ENCODE measurements at regions of chr12 and their contacts with region 1.

Region 1: DNA sequence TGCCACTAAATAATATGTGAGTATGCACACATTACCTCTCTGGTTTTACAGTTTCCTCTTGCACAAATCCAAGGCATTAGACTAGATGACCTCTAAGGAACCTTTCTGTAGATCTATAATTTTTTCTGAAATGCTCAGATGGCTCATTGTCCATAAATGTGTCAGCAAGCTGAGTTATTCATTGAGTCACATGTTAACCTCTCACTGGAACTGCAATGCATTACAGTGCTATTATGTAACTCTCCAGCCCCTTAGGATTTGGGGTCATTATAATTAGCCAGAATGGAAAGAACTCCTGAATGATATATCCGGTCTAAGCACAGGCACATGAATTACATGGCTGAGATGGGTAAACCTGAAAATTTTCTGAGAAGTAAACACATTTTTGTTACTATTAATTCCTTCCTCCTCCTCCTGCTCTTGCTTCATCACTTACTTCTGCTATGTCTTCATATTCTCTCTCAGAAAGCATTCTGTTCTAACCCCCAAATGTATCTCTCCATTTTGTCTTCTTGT is 20.3 kb upstream of the DRAM1 start:
- H3K4me3 Mint-ChIP-seq: no peak overlapping the region
- H3K27ac Mint-ChIP-seq: no peak overlapping the region
- H3K4me1 Mint-ChIP-seq: peaks cover 44% of the 10 kb centered on the region
- H3K27me3 Mint-ChIP-seq: no peaks in the 10 kb centered on the region

Region 2: DNA sequence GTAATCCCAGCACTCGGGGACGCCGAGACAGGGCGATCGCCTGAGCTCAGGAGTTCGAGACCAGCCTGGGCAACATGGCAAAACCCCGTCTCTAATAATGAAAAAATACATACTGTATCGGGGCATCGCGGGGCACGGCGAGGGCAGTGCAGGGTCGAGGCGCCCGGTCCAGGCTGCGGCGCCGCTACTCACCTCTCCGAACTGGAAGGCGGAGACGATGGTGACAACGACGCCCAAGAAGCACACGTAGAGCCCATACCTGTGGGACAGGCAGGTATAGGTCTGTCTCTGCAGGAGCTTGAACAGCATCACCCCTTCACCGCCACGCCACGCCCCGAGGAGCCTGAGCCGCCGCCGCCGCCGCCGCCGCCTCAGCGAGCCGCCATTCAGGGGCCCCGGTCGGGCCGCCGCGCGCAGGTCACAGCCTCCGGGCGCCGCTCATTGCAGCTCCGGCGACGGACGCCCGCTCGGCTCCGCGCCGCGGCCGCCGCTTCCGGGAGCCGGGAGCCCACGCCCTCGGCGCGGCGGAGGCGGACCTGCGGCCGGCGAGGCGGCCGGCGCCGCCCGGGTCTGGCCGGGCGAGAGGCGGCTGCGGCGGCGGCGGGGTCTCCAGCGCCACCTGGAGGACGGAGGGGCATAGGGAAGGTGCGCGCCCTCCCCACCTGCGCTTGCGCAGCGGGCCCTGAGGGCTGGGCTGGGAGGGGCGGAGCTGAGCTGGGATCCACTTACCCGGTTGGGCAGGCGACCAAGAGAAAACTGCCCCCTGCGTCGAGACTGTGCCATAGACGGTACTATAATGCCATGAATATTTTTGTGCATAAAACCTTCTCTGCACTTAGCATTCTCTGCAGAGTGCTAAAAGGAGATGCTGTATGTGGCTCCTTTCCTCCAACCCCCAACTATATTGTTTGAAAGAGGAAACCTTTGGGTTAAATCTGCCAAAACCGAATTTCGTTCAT is 26.5 kb before region 1 on chr12 and contains the start of gene GNPTAB:
- intact Hi-C with region 1: loop called (anchors 1 kb)
- H3K4me3 Mint-ChIP-seq: peak within 1 kb of the TSS; percentile 97
- H3K27ac Mint-ChIP-seq: peak within 1 kb of the TSS; percentile 85
- H3K4me1 Mint-ChIP-seq: peaks cover 32% of the 10 kb centered on the region
- H3K27me3 Mint-ChIP-seq: no peaks in the 10 kb centered on the region

Region 3: GRCh38 chr12:101876861-101877815 is 20.0 kb after region 1 on chr12 and contains the start of gene DRAM1:
- intact Hi-C with region 1: loop called (anchors 2 kb)
- H3K4me3 Mint-ChIP-seq: peak within 1 kb of the TSS; percentile 83
- H3K27ac Mint-ChIP-seq: peak within 1 kb of the TSS; percentile 92
- H3K4me1 Mint-ChIP-seq: peaks cover 59% of the 10 kb centered on the region
- H3K27me3 Mint-ChIP-seq: no peaks in the 10 kb centered on the region

Region 4: DNA sequence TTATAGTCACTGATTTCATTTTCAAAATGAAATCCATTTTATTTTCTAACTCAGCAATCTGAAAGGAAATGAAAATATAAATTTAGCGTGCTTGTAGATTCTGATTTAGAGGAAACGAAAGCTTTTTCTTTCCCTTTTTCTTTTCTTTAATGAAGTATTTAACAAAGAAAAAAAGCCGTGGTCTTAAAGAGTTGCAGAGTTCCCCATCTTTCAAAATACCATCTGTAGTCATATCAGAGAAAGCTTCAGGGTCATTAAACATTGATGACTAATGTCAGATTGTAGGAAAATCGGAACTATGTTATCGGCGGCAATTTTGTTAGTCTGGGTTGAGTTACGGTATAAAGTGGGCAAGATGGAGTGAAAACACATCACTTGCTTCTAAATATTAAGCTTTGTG is 52.5 kb after region 1 on chr12:
- intact Hi-C with region 1: loop called (anchors 10 kb)
- H3K4me3 Mint-ChIP-seq: peak overlapping the region; percentile 54
- H3K27ac Mint-ChIP-seq: peak overlapping the region; percentile 68
- H3K4me1 Mint-ChIP-seq: peaks cover 44% of the 10 kb centered on the region
- H3K27me3 Mint-ChIP-seq: no peaks in the 10 kb centered on the region